ENCODE measurements at regions of chr11 and their contacts with region 1.

Region 1: GRCh38 chr11:62108017-62108750 is 15.6 kb upstream of the INCENP start:
- DNase-seq: peak; percentile 55 to 71 (median 66)
- H3K4me3 ChIP-seq: no peak overlapping the region
- H3K4me3 Mint-ChIP-seq: peak overlapping the region in 2 of 8 donors; percentile 36 to 39
- H3K27ac ChIP-seq: no peak overlapping the region
- H3K27ac Mint-ChIP-seq: peak overlapping the region in 2 of 7 donors; percentile 60 to 68
- H3K4me1 ChIP-seq: peaks cover 13% of the 10 kb centered on the region
- H3K4me1 Mint-ChIP-seq: peaks cover 9 to 19% (median 13%) of the 10 kb centered on the region in 4 donors
- H3K27me3 ChIP-seq: no peaks in the 10 kb centered on the region
- H3K27me3 Mint-ChIP-seq: no peaks in the 10 kb centered on the region

Region 2: GRCh38 chr11:61747192-61747966 is 360.8 kb before region 1 on chr11:
- CTCF ChIA-PET with region 1: interaction called, 14 read pairs
- POLR2A ChIA-PET with region 1: no interaction called
- intact Hi-C with region 1: no loop called
- DNase-seq: peak in 2 of 5 donors; percentile 18 to 26
- H3K4me3 ChIP-seq: no peak overlapping the region
- H3K4me3 Mint-ChIP-seq: no peak overlapping the region
- H3K27ac ChIP-seq: no peak overlapping the region
- H3K27ac Mint-ChIP-seq: peak overlapping the region in 1 of 7 donors; percentile 12
- H3K4me1 ChIP-seq: peaks cover 7% of the 10 kb centered on the region
- H3K4me1 Mint-ChIP-seq: peaks cover 2 to 11% (median 5%) of the 10 kb centered on the region in 4 donors
- H3K27me3 ChIP-seq: no peaks in the 10 kb centered on the region
- H3K27me3 Mint-ChIP-seq: peaks cover 11 to 12% of the 10 kb centered on the region in 2 donors

Region 3: DNA sequence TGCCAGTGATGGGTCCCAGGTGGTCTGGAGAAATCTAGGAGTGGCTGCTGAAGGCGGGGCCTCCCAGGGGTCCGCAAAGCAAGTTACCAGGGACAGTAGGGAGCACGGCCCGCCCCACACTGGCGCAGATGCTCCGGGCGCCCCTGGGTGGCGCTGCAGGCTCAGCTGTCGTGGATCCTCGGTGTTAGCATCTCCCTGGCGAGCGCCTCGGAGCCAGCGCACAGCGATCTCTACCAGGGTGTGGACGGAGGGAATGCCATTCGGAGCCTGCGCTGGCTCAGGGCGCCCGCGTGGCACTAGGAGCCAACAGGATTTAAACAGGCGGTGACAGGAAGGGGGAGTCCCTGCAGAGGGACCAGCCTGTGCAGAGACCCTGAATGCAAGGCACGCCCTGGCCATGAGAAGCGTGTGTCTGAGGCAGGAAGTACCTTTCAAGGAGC is 237.0 kb before region 1 on chr11:
- CTCF ChIA-PET with region 1: interaction called, 21 read pairs
- POLR2A ChIA-PET with region 1: no interaction called
- intact Hi-C with region 1: loop called (anchors 1 kb)
- DNase-seq: peak; percentile 48 to 64 (median 55)
- H3K4me3 ChIP-seq: no peak overlapping the region
- H3K4me3 Mint-ChIP-seq: peak overlapping the region in 6 of 8 donors; percentile 62 to 80 (median 68)
- H3K27ac ChIP-seq: no peak overlapping the region
- H3K27ac Mint-ChIP-seq: peak overlapping the region in 1 of 7 donors; percentile 72
- H3K4me1 ChIP-seq: peaks cover 4% of the 10 kb centered on the region
- H3K4me1 Mint-ChIP-seq: peaks cover 4 to 7% (median 5%) of the 10 kb centered on the region in 4 donors
- H3K27me3 ChIP-seq: no peaks in the 10 kb centered on the region
- H3K27me3 Mint-ChIP-seq: peaks cover 2 to 6% of the 10 kb centered on the region in 2 donors

Region 4: DNA sequence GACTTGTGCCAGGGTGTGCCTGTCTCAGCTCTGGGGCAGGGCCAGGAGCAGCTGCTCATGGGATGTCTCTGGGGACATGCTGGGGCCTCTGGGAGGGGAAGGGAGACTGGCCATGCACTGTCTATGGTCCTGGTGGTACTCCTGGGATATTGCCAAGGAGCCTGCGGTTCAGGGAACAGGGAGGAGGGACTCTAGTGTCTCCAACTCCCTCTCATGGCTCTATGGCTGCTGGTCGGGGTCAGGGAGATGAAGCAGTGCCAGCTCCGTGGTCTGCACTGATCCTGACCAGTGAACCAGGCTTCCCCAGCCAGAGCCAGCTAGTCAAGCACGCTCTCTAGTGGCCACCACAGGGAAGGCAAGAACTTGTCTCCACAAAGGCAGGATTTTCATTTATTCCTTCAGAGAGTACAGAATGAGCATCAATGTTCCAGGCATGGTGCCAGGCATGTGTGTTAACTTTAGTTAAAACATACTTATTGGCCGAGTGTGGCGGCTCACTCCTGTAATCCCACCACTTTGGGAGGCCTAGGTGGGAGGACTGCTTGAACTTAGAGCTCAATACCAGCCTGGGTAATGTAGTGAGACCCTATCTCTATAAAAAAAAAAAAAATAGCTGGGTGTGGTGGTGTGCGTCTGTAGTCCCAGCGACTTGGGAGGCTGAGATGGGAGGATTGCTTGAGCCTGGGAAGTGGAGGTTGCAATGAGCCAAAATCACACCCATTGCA is 160.5 kb before region 1 on chr11:
- CTCF ChIA-PET with region 1: interaction called, 25 read pairs
- POLR2A ChIA-PET with region 1: no interaction called
- intact Hi-C with region 1: no loop called
- DNase-seq: peak; percentile 55 to 64 (median 59)
- H3K4me3 ChIP-seq: no peak overlapping the region
- H3K4me3 Mint-ChIP-seq: no peak overlapping the region
- H3K27ac ChIP-seq: no peak overlapping the region
- H3K27ac Mint-ChIP-seq: peak overlapping the region in 2 of 7 donors; percentile 41 to 82
- H3K4me1 ChIP-seq: no peaks in the 10 kb centered on the region
- H3K4me1 Mint-ChIP-seq: no peaks in the 10 kb centered on the region
- H3K27me3 ChIP-seq: no peaks in the 10 kb centered on the region
- H3K27me3 Mint-ChIP-seq: peaks cover 0 to 3% of the 10 kb centered on the region in 2 donors

Region 5: GRCh38 chr11:62088331-62088933 is 19.8 kb before region 1 on chr11:
- CTCF ChIA-PET with region 1: interaction called, 75 read pairs
- POLR2A ChIA-PET with region 1: no interaction called
- intact Hi-C with region 1: no loop called
- DNase-seq: no peak
- H3K4me3 ChIP-seq: no peak overlapping the region
- H3K4me3 Mint-ChIP-seq: no peak overlapping the region
- H3K27ac ChIP-seq: no peak overlapping the region
- H3K27ac Mint-ChIP-seq: no peak overlapping the region
- H3K4me1 ChIP-seq: no peaks in the 10 kb centered on the region
- H3K4me1 Mint-ChIP-seq: no peaks in the 10 kb centered on the region
- H3K27me3 ChIP-seq: no peaks in the 10 kb centered on the region
- H3K27me3 Mint-ChIP-seq: peaks cover 3 to 4% of the 10 kb centered on the region in 2 donors

Region 6: GRCh38 chr11:62123669-62124185 is 15.5 kb after region 1 on chr11 and contains the start of gene INCENP:
- CTCF ChIA-PET with region 1: interaction called, 22 read pairs
- POLR2A ChIA-PET with region 1: interaction called, 4 read pairs
- intact Hi-C with region 1: loop called (anchors 1 kb)
- DNase-seq: peak; percentile 92 to 98 (median 96)
- H3K4me3 ChIP-seq: peak within 1 kb of the TSS; percentile 88 to 96
- H3K4me3 Mint-ChIP-seq: peak within 1 kb of the TSS; percentile 93 to 98 (median 95)
- H3K27ac ChIP-seq: peak within 1 kb of the TSS; percentile 82
- H3K27ac Mint-ChIP-seq: peak within 1 kb of the TSS; percentile 86 to 95 (median 92)
- H3K4me1 ChIP-seq: peaks cover 23% of the 10 kb centered on the region
- H3K4me1 Mint-ChIP-seq: peaks cover 15 to 42% (median 27%) of the 10 kb centered on the region in 4 donors
- H3K27me3 ChIP-seq: no peaks in the 10 kb centered on the region
- H3K27me3 Mint-ChIP-seq: peaks cover 0 to 2% of the 10 kb centered on the region in 2 donors
- total RNA-seq, gene INCENP: 28.4 to 32.1 TPM